Activated T-helper 1 cell treated with anti-CD3 and anti-CD28 coated beads, Interleukin-12 subunit alpha, Interleukin-12 subunit beta, Interleukin-2, Interleukin-4 antibody, amounts not matched to agents 30 ng/mL and 10 ng/mL and 1 ng/mL, durations not matched to agents 14 hours and 24 hours and 36 hours (primary cell): ENCODE measurements at regions of chr5 and their contacts with region 1.

Region 1: GRCh38 chr5:7815892-7816534 is 34.9 kb downstream of the CFAP90 start:
- DNase-seq: peak; percentile 47
- H3K4me3 Mint-ChIP-seq: no peak overlapping the region
- H3K27ac Mint-ChIP-seq: no peak overlapping the region
- H3K4me1 Mint-ChIP-seq: peaks cover 7% of the 10 kb centered on the region
- H3K27me3 Mint-ChIP-seq: peaks cover 12% of the 10 kb centered on the region

Region 2: DNA sequence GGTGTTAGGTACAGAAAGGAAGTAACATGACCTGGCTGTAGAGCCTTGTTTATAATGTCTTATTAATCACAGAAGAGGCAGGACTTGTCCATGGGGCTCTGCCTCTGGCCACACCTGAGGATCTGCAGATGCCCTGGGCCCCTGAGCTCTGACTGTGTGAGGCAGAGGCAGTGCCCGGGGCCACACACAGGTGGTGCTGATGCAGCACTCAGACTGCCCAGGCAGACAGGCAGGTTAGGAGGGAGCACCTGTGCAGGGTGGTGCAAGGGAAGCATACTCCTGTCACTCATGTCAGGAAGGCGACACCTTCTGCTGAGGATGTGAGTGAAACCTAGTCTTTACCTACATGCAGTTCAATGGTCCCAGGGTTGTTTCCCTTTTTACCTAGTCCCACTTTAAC is 53.7 kb before region 1 on chr5:
- intact Hi-C with region 1: loop called (anchors 5 kb)
- DNase-seq: no peak
- H3K4me3 Mint-ChIP-seq: no peak overlapping the region
- H3K27ac Mint-ChIP-seq: no peak overlapping the region
- H3K4me1 Mint-ChIP-seq: no peaks in the 10 kb centered on the region
- H3K27me3 Mint-ChIP-seq: no peaks in the 10 kb centered on the region

Region 3: GRCh38 chr5:7868773-7869473 is 52.9 kb after region 1 on chr5 and contains the starts of genes FASTKD3 and MTRR:
- intact Hi-C with region 1: no loop called
- DNase-seq: peak; percentile 87
- H3K4me3 Mint-ChIP-seq: peak within 1 kb of the TSS; percentile 97
- H3K27ac Mint-ChIP-seq: peak within 1 kb of the TSS; percentile 89
- H3K4me1 Mint-ChIP-seq: peaks cover 73% of the 10 kb centered on the region
- H3K27me3 Mint-ChIP-seq: no peaks in the 10 kb centered on the region
- total RNA-seq, gene FASTKD3: 13.5 and 18.6 TPM in 2 replicates
- total RNA-seq, gene MTRR: 83.0 and 90.4 TPM in 2 replicates

Region 4: DNA sequence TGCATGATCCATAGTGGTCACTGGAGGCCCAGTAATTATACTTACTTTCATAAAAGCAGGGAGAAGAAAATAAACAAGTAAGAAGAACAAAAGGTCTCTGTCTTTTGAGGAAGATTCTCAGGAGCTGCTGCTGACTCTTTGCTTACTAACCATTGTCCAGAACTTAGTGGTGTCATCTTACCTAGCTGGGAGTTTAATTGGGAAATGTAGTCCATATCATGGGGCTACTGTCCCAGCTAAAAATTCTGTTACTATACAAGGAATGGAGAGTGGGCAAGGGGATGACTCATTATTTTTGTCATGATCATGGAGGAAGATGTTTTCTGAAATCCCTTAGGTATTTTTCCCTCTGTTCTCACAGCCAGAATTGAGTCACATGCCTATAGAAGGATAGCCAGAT is 692.2 kb after region 1 on chr5:
- intact Hi-C with region 1: no loop called
- DNase-seq: no peak
- H3K4me3 Mint-ChIP-seq: no peak overlapping the region
- H3K27ac Mint-ChIP-seq: no peak overlapping the region
- H3K4me1 Mint-ChIP-seq: no peaks in the 10 kb centered on the region
- H3K27me3 Mint-ChIP-seq: no peaks in the 10 kb centered on the region